Panc1 (cell line): ENCODE measurements at regions of chr5 and their contacts with region 1.

Region 1: DNA sequence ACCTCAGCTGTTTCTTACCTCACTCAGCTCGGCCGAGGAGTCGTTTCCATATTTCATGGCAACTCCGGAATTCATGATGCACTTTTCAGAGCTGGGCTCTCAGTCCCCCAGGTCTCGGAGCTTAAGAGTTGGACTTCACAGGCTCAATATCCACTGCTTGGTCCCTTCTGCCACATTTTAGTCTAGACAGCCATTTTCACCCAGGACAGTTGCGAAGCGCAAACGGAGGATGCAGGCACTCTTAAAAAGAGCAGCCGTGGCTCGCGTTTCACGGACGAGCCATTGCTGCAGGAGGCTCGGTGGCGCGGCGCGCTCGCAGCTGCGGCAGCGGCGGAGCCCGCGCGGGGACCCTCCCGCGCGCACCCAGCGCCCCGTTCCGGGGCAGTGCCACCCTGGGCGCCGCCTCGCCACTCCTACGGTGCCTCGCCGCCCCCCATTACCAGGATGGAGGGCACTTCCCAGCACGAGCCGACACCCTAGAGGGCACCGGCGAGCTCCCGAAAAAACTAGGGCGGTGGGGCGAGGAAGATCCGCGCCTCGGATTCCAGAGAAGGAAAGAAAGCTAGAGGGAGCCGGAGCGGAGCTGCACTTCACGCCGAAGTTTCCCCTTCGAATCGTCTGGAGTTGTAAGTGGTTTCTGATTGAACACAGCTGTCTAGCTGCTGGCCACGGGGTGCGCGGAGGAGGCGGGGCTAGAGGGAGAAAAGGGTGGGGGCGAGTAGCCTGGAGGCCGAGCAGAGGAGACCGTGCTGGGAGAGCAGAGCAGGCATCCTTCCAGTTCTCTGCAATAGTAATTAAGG is 140.3 kb downstream of the TSSK1B start:
- DNase-seq: no peak
- ATAC-seq: peak; percentile 92
- H3K4me3 ChIP-seq: peak overlapping the region; percentile 53 to 56
- H3K27ac ChIP-seq: no peak overlapping the region
- H3K4me1 ChIP-seq: peaks cover 4% of the 10 kb centered on the region; the same call in 1 of the 2 replicates
- H3K27me3 ChIP-seq: peaks cover 37% of the 10 kb centered on the region
- CTCF ChIP-seq: peak; percentile 40

Region 2: GRCh38 chr5:113043491-113043931 is 251.0 kb before region 1 on chr5:
- CTCF ChIA-PET with region 1: no interaction called
- POLR2A ChIA-PET with region 1: interaction called, 10 read pairs
- in situ Hi-C with region 1: no loop called
- intact Hi-C with region 1: no loop called
- DNase-seq: no peak
- ATAC-seq: peak; percentile 55
- H3K4me3 ChIP-seq: no peak overlapping the region
- H3K27ac ChIP-seq: no peak overlapping the region
- H3K4me1 ChIP-seq: no peaks in the 10 kb centered on the region
- H3K27me3 ChIP-seq: no peaks in the 10 kb centered on the region
- CTCF ChIP-seq: peak; percentile 64; the same call in 1 of the 2 replicates